CD8-positive, alpha-beta T cell (primary cell): ENCODE measurements at regions of chr9 and their contacts with region 1.

Region 1: DNA sequence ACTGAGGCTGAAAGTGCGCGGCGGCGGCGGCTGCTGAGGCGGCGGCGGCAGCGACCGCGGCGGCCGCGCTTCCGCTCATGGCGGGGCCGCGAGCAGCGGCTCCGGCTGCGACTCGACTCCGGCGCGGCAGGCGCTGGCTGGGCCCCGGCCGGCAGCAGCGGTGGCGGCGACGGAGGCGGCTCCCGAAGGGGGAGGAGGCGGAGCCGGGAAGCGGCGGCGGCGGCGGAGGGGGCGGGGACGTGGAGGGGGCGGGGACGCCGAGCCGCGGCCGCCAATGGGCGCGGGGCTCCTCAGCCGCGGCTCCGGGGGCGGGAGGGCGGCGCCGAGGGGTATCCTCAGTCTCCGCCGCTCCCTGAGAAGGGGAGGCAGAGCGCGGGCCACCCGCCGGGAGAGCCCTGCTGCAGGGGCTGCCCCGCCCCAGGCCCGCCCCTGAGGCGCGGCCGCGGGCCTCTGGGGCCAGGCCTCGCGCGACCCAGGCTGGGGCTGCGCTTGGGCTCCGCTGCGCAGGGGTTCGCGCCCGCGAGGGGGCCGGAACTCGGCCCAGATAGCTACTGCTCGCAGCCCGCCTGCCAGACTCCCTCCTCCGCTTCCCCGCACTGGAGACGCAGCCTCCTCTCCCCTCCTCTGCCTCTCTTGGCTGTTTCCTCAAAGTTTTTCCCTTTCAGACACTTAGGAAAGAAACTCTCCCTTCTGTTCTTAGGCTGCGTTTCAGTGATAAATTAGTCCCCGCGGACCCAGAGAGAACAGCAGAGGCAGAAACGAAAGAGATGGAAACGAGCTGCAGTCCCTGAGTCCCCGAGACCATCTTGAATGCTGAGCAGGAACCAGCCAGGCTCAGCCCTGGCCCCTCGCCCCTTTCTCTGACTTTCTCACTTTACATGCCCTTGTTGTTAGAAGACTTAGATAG is 85.0 kb upstream of the MELK start:
- DNase-seq: peak; percentile 82 to 97 (median 89)
- ATAC-seq: peak; percentile 85
- H3K4me3 ChIP-seq: peak overlapping the region; percentile 78 to 79
- H3K4me3 Mint-ChIP-seq: peak overlapping the region; percentile 95
- H3K27ac ChIP-seq: peak overlapping the region; percentile 86 to 95
- H3K27ac Mint-ChIP-seq: peak overlapping the region; percentile 97
- H3K4me1 ChIP-seq: peaks cover 38% of the 10 kb centered on the region
- H3K4me1 Mint-ChIP-seq: peaks cover 63% of the 10 kb centered on the region
- H3K27me3 ChIP-seq: no peaks in the 10 kb centered on the region
- H3K27me3 Mint-ChIP-seq: no peaks in the 10 kb centered on the region
- CTCF ChIP-seq: no peak

Region 2: GRCh38 chr9:36298586-36298985 is 189.1 kb before region 1 on chr9:
- CTCF ChIA-PET with region 1: no interaction called
- POLR2A ChIA-PET with region 1: no interaction called
- intact Hi-C with region 1: no loop called
- DNase-seq: no peak
- ATAC-seq: no peak
- H3K4me3 ChIP-seq: no peak overlapping the region
- H3K4me3 Mint-ChIP-seq: no peak overlapping the region
- H3K27ac ChIP-seq: no peak overlapping the region
- H3K27ac Mint-ChIP-seq: no peak overlapping the region
- H3K4me1 ChIP-seq: no peaks in the 10 kb centered on the region
- H3K4me1 Mint-ChIP-seq: no peaks in the 10 kb centered on the region
- H3K27me3 ChIP-seq: no peaks in the 10 kb centered on the region
- H3K27me3 Mint-ChIP-seq: no peaks in the 10 kb centered on the region
- CTCF ChIP-seq: no peak

Region 3: GRCh38 chr9:36461323-36461722 is 26.4 kb before region 1 on chr9:
- CTCF ChIA-PET with region 1: interaction called, 3 read pairs
- POLR2A ChIA-PET with region 1: interaction called, 31 read pairs
- intact Hi-C with region 1: loop called (anchors 1 kb)
- DNase-seq: peak in 1 of 9 experiments; percentile 30
- ATAC-seq: no peak
- H3K4me3 ChIP-seq: no peak overlapping the region
- H3K4me3 Mint-ChIP-seq: no peak overlapping the region
- H3K27ac ChIP-seq: peak overlapping the region in 1 of 2 experiments; percentile 33
- H3K27ac Mint-ChIP-seq: peak overlapping the region; percentile 73
- H3K4me1 ChIP-seq: peaks cover 19% of the 10 kb centered on the region
- H3K4me1 Mint-ChIP-seq: peaks cover 57% of the 10 kb centered on the region
- H3K27me3 ChIP-seq: no peaks in the 10 kb centered on the region
- H3K27me3 Mint-ChIP-seq: no peaks in the 10 kb centered on the region
- CTCF ChIP-seq: no peak

Region 4: GRCh38 chr9:36499174-36499890 is 11.6 kb after region 1 on chr9:
- CTCF ChIA-PET with region 1: no interaction called
- POLR2A ChIA-PET with region 1: interaction called, 13 read pairs
- intact Hi-C with region 1: no loop called
- DNase-seq: no peak
- ATAC-seq: no peak
- H3K4me3 ChIP-seq: no peak overlapping the region
- H3K4me3 Mint-ChIP-seq: no peak overlapping the region
- H3K27ac ChIP-seq: no peak overlapping the region
- H3K27ac Mint-ChIP-seq: no peak overlapping the region
- H3K4me1 ChIP-seq: peaks cover 14% of the 10 kb centered on the region
- H3K4me1 Mint-ChIP-seq: peaks cover 35% of the 10 kb centered on the region
- H3K27me3 ChIP-seq: no peaks in the 10 kb centered on the region
- H3K27me3 Mint-ChIP-seq: no peaks in the 10 kb centered on the region
- CTCF ChIP-seq: no peak

Region 5: GRCh38 chr9:36572515-36573418 is 85.0 kb after region 1 on chr9 and contains the start of gene MELK:
- CTCF ChIA-PET with region 1: no interaction called
- POLR2A ChIA-PET with region 1: interaction called, 3 read pairs
- intact Hi-C with region 1: loop called in 1 of 2 experiments (anchors 1 kb)
- DNase-seq: peak; percentile 69 to 91 (median 82)
- ATAC-seq: peak; percentile 83
- H3K4me3 ChIP-seq: peak within 1 kb of the TSS; percentile 70
- H3K4me3 Mint-ChIP-seq: peak within 1 kb of the TSS; percentile 87
- H3K27ac ChIP-seq: peak within 1 kb of the TSS; percentile 63 to 72
- H3K27ac Mint-ChIP-seq: peak within 1 kb of the TSS; percentile 55
- H3K4me1 ChIP-seq: peaks cover 10% of the 10 kb centered on the region
- H3K4me1 Mint-ChIP-seq: peaks cover 9% of the 10 kb centered on the region
- H3K27me3 ChIP-seq: no peaks in the 10 kb centered on the region
- H3K27me3 Mint-ChIP-seq: peaks cover 3% of the 10 kb centered on the region
- CTCF ChIP-seq: no peak
- total RNA-seq, gene MELK: 0.24 TPM in 1 of 2 experiments, not detected in the other

Region 6: DNA sequence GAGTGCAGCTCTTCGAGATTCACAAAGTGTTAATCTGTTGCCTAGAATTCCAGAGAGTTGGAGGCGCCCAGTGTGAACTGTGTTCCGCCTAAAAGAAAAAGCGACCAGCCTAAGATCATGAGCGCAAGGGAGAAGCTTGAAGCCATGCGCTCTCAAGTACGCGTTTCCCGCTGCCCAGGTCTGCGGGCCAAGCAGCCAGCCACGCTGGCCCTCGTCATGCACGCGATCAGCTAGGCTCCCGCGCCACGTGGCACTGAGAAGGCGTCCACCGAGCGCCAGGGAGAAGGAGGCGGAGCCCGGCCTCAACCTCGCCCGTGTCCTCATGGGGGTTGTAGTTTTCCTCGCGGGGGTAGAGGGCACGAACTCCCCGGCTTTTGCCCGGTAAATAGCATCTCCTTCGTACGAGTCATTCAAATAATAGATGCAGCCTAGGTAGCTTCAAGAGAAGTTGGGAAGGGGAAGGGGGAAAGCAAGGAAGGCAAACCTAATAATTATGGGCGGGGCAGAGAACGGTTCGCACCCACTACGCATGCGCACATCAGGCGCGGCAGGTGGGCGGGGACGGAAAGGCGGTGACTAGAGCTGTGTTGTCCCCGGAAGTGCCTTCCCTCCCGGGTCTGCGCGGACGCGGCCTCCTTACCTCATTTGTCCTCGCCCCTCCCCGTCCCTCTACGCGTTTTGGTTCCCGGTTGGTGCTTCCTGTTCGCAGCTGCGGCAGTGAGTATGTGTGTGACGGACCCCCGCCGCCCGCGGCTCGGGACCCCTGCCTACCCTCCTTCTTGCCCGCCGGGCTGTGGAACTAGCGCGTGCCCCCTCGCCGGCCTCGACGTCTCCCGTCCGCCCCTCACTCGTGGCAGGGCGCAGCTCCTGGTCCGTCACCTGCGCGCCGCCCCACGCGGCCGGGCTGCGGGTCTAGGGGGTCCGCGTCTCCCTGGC is 632.4 kb after region 1 on chr9 and contains the start of gene ZCCHC7:
- CTCF ChIA-PET with region 1: no interaction called
- POLR2A ChIA-PET with region 1: no interaction called
- intact Hi-C with region 1: loop called in 1 of 2 experiments (anchors 10 kb)
- DNase-seq: peak; percentile 95 to 98 (median 97)
- ATAC-seq: peak; percentile 94
- H3K4me3 ChIP-seq: peak within 1 kb of the TSS; percentile 66 to 77
- H3K4me3 Mint-ChIP-seq: peak within 1 kb of the TSS; percentile 97
- H3K27ac ChIP-seq: peak within 1 kb of the TSS; percentile 89 to 97
- H3K27ac Mint-ChIP-seq: peak within 1 kb of the TSS; percentile 98
- H3K4me1 ChIP-seq: peaks cover 23% of the 10 kb centered on the region
- H3K4me1 Mint-ChIP-seq: peaks cover 41% of the 10 kb centered on the region
- H3K27me3 ChIP-seq: no peaks in the 10 kb centered on the region
- H3K27me3 Mint-ChIP-seq: no peaks in the 10 kb centered on the region
- CTCF ChIP-seq: no peak
- total RNA-seq, gene ZCCHC7: 35.2 to 39.5 TPM